WTC11 (cell line): ENCODE measurements at regions of chr9 and their contacts with region 1.

Region 1: GRCh38 chr9:127489471-127490115 is 38.3 kb downstream of the LRSAM1 start:
- DNase-seq: peak; percentile 79
- ATAC-seq: peak; percentile 98
- H3K4me3 Mint-ChIP-seq: no peak overlapping the region
- H3K27ac Mint-ChIP-seq: peak overlapping the region; percentile 43; the same call in 1 of the 2 replicates
- H3K4me1 Mint-ChIP-seq: peaks cover 5% of the 10 kb centered on the region
- H3K27me3 Mint-ChIP-seq: no peaks in the 10 kb centered on the region
- CTCF ChIP-seq: no peak

Region 2: GRCh38 chr9:127537792-127538191 is 48.2 kb after region 1 on chr9:
- CTCF ChIA-PET with region 1: interaction called, 10 read pairs
- POLR2A ChIA-PET with region 1: no interaction called
- DNase-seq: peak; percentile 48
- ATAC-seq: peak; percentile 87
- H3K4me3 Mint-ChIP-seq: no peak overlapping the region
- H3K27ac Mint-ChIP-seq: no peak overlapping the region
- H3K4me1 Mint-ChIP-seq: peaks cover 15% of the 10 kb centered on the region
- H3K27me3 Mint-ChIP-seq: no peaks in the 10 kb centered on the region
- CTCF ChIP-seq: no peak

Region 3: GRCh38 chr9:127578955-127579853 is 89.6 kb after region 1 on chr9:
- CTCF ChIA-PET with region 1: interaction called, 10 read pairs
- POLR2A ChIA-PET with region 1: no interaction called
- DNase-seq: peak; percentile 50
- ATAC-seq: peak; percentile 75
- H3K4me3 Mint-ChIP-seq: no peak overlapping the region
- H3K27ac Mint-ChIP-seq: 0 out of 2 replicates have a peak overlapping the region, but pooled peaks have one; percentile 48
- H3K4me1 Mint-ChIP-seq: peaks cover 16% of the 10 kb centered on the region
- H3K27me3 Mint-ChIP-seq: no peaks in the 10 kb centered on the region
- CTCF ChIP-seq: no peak

Region 4: GRCh38 chr9:127586537-127586936 is 96.9 kb after region 1 on chr9:
- CTCF ChIA-PET with region 1: interaction called, 14 read pairs
- POLR2A ChIA-PET with region 1: no interaction called
- DNase-seq: peak; percentile 86
- ATAC-seq: peak; percentile 92
- H3K4me3 Mint-ChIP-seq: no peak overlapping the region
- H3K27ac Mint-ChIP-seq: no peak overlapping the region
- H3K4me1 Mint-ChIP-seq: peaks cover 15% of the 10 kb centered on the region
- H3K27me3 Mint-ChIP-seq: no peaks in the 10 kb centered on the region
- CTCF ChIP-seq: peak; percentile 72